ENCODE measurements at regions of chr17 and their contacts with region 1.

Region 1: DNA sequence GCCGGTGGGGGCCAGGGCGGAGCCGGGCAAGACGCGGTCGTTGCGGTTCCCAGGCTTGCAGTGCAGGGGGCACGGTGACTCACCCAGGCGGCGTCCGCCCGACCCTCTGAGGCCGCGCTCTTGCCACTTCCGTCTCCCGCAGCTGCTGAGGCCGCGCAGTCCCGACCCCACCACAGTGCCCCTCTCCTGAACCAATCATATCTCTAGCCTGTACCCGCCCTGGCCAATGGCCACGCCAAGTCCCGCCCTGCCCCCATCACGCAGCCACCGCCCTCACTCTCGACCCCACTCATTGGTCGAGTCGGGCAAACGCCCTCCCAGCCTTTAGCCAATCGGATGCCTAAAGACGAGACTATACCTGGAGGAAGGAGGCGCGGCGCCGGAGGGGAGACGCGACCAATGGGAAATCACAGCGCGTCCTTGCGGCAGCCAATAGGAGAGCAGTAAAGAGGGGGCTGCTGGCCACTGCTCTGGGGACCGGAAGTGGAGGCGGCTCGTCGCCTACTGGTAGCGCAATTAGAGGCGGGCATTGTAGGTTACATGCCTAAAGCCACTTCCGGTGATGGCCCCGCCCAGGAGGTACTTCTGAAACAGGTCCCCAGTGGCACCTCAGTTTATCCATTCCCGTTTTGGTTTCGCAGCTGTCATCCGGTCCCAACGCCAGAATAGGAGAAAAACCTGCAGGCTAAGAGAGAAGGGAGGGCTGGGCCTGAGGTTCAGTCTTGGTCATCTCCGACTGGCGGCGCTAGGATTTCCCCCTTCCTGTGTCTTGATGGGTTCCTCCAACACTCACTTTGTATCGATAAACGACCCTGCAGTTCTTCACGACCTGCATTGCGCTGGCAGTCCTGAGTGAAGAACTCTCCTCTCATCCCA is 3.5 kb upstream of the MTMR4 start:
- DNase-seq: peak; percentile 95
- ATAC-seq: peak; percentile 79
- H3K4me3 Mint-ChIP-seq: peak overlapping the region; percentile 96
- H3K27ac Mint-ChIP-seq: peak overlapping the region; percentile 97
- H3K4me1 Mint-ChIP-seq: peaks cover 46% of the 10 kb centered on the region
- H3K27me3 Mint-ChIP-seq: no peaks in the 10 kb centered on the region
- CTCF ChIP-seq: no peak

Region 2: DNA sequence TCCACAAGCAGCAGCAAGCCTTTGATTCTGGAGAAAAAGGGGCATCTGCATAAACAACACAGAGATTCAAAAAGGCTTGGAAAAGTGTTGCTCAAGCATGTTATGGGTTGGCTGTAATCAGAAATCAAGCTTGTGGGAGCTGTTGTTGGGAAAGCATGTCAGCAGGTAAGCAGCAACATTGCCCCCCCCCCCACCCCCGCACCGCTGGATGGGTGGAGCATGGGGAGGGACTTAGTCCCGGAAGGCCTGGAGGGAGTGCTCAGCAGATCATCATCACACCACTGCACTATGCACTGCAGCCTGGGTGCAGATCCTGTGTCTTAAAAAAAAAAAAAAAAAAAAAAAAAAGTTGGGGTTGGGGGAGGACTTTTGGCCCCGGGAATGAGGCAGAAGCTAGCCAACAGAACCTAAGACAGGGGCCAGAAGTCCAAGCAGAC is 1449.7 kb before region 1 on chr17:
- CTCF ChIA-PET with region 1: no interaction called
- POLR2A ChIA-PET with region 1: no interaction called
- intact Hi-C with region 1: no loop called
- DNase-seq: no peak
- ATAC-seq: no peak
- H3K4me3 Mint-ChIP-seq: no peak overlapping the region
- H3K27ac Mint-ChIP-seq: no peak overlapping the region
- H3K4me1 Mint-ChIP-seq: no peaks in the 10 kb centered on the region
- H3K27me3 Mint-ChIP-seq: peaks cover 11% of the 10 kb centered on the region
- CTCF ChIP-seq: no peak

Region 3: GRCh38 chr17:57084802-57085447 is 1433.0 kb before region 1 on chr17 and contains the start of gene AKAP1:
- CTCF ChIA-PET with region 1: no interaction called
- POLR2A ChIA-PET with region 1: no interaction called
- intact Hi-C with region 1: loop called (anchors 10 kb)
- DNase-seq: peak; percentile 94
- ATAC-seq: peak; percentile 89
- H3K4me3 Mint-ChIP-seq: peak within 1 kb of the TSS; percentile 90
- H3K27ac Mint-ChIP-seq: peak within 1 kb of the TSS; percentile 91
- H3K4me1 Mint-ChIP-seq: peaks cover 25% of the 10 kb centered on the region
- H3K27me3 Mint-ChIP-seq: no peaks in the 10 kb centered on the region
- CTCF ChIP-seq: no peak
- total RNA-seq, gene AKAP1: 22.5 and 26.2 TPM in 2 replicates

Region 4: DNA sequence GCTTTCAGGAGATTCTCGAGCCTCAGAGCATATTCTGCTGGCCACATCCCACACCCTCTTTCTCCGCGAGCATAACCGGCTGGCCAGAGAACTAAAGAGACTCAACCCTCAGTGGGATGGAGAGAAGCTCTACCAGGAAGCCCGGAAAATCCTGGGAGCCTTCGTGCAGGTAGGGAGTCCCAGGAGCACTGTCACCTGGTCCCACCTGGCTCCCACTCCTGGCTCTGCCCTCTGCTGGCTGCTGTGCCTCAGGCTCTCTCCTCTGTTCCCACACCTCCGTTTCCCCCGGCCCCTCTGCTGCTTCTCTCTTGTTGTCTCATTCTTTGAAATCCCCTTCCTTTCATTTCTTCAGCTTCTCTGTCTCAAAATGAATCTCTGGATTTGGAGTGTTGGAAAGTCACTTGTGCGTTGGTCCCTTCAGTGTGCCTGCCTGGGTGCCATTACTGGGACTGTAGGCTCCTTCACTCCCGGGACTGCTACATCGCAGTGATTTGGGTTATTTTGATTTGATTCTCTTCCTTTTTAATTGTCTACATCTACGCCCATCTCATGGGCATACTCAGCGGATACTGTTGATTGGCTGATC is 263.1 kb before region 1 on chr17:
- CTCF ChIA-PET with region 1: no interaction called
- POLR2A ChIA-PET with region 1: no interaction called
- intact Hi-C with region 1: no loop called
- DNase-seq: no peak
- ATAC-seq: no peak
- H3K4me3 Mint-ChIP-seq: no peak overlapping the region
- H3K27ac Mint-ChIP-seq: no peak overlapping the region
- H3K4me1 Mint-ChIP-seq: peaks cover 4% of the 10 kb centered on the region
- H3K27me3 Mint-ChIP-seq: peaks cover 16% of the 10 kb centered on the region
- CTCF ChIP-seq: no peak

Region 5: GRCh38 chr17:58289869-58290268 is 228.1 kb before region 1 on chr17:
- CTCF ChIA-PET with region 1: no interaction called
- POLR2A ChIA-PET with region 1: no interaction called
- intact Hi-C with region 1: no loop called
- DNase-seq: no peak
- ATAC-seq: no peak
- H3K4me3 Mint-ChIP-seq: no peak overlapping the region
- H3K27ac Mint-ChIP-seq: no peak overlapping the region
- H3K4me1 Mint-ChIP-seq: no peaks in the 10 kb centered on the region
- H3K27me3 Mint-ChIP-seq: peaks cover 26% of the 10 kb centered on the region
- CTCF ChIP-seq: no peak

Region 6: GRCh38 chr17:58337600-58338453 is 180.1 kb before region 1 on chr17:
- CTCF ChIA-PET with region 1: no interaction called
- POLR2A ChIA-PET with region 1: interaction called, 20 read pairs
- intact Hi-C with region 1: loop called (anchors 1 kb)
- DNase-seq: peak; percentile 84
- ATAC-seq: peak; percentile 63
- H3K4me3 Mint-ChIP-seq: peak overlapping the region; percentile 100
- H3K27ac Mint-ChIP-seq: peak overlapping the region; percentile 99
- H3K4me1 Mint-ChIP-seq: peaks cover 97% of the 10 kb centered on the region
- H3K27me3 Mint-ChIP-seq: no peaks in the 10 kb centered on the region
- CTCF ChIP-seq: no peak

Region 7: DNA sequence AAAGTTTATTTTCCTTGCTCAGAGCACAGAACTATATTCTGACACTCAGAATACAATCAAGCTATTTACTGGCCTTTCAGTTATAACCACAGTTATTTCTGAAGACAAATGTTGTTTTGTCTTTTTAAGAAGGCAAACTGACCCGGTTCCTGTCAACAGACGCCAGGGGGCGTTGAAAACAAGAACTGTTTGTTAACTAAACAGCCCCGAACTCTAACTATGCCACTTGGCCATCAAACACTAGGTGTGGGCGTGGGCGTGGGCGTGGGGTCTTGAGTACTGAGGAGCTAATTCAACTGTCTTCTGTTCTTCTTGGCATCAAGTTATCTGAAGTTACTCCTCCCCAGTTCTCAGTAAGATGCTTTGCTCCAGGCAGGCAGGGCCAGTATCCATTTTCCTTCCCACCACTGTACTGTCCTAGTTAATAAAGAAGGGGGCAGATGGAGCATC is 59.7 kb after region 1 on chr17:
- CTCF ChIA-PET with region 1: interaction called, 3 read pairs
- POLR2A ChIA-PET with region 1: no interaction called
- intact Hi-C with region 1: loop called (anchors 2 kb)
- DNase-seq: peak; percentile 17
- ATAC-seq: no peak
- H3K4me3 Mint-ChIP-seq: no peak overlapping the region
- H3K27ac Mint-ChIP-seq: no peak overlapping the region
- H3K4me1 Mint-ChIP-seq: no peaks in the 10 kb centered on the region
- H3K27me3 Mint-ChIP-seq: no peaks in the 10 kb centered on the region
- CTCF ChIP-seq: no peak

Region 8: DNA sequence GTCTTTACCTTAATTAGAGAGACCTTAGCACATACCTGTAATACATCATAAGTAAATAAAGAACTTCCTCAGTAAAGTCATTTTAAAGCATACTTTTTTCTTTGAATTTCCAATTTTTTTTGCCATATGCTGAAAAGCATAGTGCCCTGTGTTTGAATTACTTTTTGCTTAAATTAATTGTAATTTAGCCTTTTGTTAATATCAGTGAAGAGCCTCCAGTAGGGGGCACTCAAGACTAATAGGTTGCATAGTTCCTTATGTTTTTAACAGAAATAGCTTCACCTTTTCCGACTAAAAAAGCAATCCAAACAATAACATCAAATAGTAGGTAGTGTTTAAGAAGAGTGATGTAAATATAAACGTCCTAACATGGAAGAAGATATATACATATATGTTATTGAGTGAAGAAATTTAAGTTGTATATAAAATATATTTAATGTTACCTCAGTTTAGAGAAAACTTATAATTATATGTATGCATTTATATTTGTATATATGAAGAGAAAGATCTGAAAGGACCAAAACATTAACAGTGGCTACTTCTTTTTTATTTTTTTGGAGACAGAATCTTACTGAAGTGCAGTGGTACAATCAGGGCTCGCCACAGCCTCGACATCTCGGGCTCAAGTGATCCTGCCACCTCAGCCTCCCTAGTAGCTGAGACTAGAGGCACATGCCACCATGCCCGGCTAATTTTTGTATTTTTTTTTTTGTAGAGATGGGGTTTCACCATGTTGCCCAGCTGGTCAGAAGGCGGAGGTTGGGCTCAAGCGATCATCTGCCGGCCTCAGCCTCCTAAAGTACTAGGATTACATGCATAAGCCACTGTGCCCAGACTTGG is 193.2 kb after region 1 on chr17:
- CTCF ChIA-PET with region 1: interaction called, 3 read pairs
- POLR2A ChIA-PET with region 1: interaction called, 4 read pairs
- intact Hi-C with region 1: loop called (anchors 1 kb)
- DNase-seq: no peak
- ATAC-seq: peak; percentile 40
- H3K4me3 Mint-ChIP-seq: no peak overlapping the region
- H3K27ac Mint-ChIP-seq: no peak overlapping the region
- H3K4me1 Mint-ChIP-seq: peaks cover 12% of the 10 kb centered on the region
- H3K27me3 Mint-ChIP-seq: no peaks in the 10 kb centered on the region
- CTCF ChIP-seq: no peak

Region 9: DNA sequence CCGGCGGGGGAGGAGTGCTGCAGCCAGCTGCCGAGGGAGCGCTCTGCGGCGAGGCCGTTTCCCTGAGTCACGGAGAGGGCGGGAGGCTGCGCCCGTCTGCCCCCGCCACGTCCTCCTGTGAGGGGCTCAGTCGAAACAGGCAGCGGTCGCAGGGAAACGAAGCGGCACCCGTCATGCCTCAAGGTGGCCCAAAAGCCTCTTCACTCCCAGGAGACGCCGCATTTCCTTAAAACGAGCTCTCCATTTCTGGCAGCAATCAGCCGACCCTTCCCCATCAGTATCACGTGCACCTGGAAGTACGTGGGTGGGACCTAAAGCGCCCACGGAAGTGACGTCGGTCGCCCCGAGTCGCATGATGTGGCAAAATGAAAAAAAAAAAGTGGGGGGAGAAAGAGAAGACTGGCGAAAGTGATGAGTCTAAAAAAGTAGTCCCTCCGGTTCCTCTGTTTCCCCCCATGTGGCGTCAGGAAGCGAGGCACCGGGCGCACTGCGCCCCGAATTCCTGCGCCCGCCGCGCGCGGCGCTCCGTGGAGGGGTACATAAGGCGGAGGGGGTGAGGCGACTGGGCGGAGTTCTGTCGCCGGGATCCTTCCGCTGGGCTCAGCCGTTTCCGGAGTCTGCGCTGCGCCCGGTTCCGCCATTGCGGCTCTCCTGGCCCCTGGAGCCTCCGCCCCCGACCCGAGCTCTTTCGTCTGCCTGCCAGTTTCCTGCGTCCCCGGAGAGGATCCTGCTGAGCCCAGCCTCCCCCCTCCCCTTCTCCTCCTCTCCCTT is 1101.5 kb after region 1 on chr17 and contains the start of gene CLTC:
- CTCF ChIA-PET with region 1: no interaction called
- POLR2A ChIA-PET with region 1: no interaction called
- intact Hi-C with region 1: loop called (anchors 10 kb)
- DNase-seq: peak; percentile 89
- ATAC-seq: peak; percentile 83
- H3K4me3 Mint-ChIP-seq: peak within 1 kb of the TSS; percentile 94
- H3K27ac Mint-ChIP-seq: peak within 1 kb of the TSS; percentile 98
- H3K4me1 Mint-ChIP-seq: peaks cover 59% of the 10 kb centered on the region
- H3K27me3 Mint-ChIP-seq: no peaks in the 10 kb centered on the region
- CTCF ChIP-seq: no peak
- total RNA-seq, gene CLTC: 148 and 189 TPM in 2 replicates